Activated CD4-positive, alpha-beta T cell treated with anti-CD3 and anti-CD28 coated beads, Interleukin-2, amount 10 ng/mL, durations not matched to agents 24 days and 14 days (primary cell): ENCODE measurements at regions of chr12 and their contacts with region 1.

Region 1: DNA sequence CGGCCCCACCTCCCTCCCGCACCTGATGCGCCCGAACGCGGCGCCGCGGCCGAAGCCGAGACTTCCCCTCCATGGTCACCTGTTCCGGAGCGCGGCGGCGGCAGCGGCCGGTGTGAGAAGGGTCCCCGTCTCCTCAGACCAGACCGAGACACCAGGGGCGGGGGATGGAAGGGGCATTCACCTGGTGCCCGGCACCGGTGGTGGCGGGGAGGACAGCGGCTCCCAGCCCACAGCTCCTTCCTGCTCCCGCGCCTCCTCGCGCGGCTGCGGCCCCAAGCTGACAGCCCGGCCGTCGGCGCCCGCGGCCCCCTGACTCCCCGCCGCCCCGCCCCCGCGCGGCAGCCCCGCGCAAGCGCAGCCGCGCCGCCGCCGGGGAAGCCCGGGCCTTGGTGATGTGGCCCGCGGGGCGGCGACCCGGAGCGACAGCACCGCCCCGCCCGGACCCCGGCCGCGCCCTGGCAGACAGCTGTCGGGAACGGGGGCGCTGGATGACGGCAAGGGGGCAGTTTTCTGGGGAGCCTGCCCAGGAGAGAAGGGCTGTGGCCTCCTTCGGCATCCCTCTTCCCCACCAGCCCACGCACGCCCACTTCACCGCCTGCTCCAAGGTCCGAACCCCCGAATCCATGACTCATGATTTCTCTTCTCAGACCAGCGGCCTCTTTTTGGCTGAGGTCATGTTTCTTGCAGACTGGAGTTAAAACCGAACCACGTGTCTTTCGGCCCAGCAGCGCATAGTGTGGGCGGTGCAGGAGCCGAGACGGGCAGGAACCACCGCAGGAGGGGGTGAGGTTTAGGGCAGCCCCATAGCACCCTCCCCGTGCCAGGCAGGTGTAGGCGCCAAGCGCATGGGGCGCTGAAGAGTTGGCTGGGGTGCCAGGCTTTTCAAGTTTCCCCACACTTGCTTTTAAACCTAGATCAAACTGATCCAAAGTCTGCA is at the start of gene SLC41A2:
- DNase-seq: peak; percentile 95
- H3K4me3 Mint-ChIP-seq: peak within 1 kb of the TSS; percentile 85
- H3K27ac Mint-ChIP-seq: peak within 1 kb of the TSS; percentile 92
- H3K4me1 Mint-ChIP-seq: peaks cover 29% of the 10 kb centered on the region
- H3K27me3 Mint-ChIP-seq: peaks cover 39% of the 10 kb centered on the region
- total RNA-seq, gene SLC41A2: 11.5 and 12.3 TPM in 2 replicates

Region 2: DNA sequence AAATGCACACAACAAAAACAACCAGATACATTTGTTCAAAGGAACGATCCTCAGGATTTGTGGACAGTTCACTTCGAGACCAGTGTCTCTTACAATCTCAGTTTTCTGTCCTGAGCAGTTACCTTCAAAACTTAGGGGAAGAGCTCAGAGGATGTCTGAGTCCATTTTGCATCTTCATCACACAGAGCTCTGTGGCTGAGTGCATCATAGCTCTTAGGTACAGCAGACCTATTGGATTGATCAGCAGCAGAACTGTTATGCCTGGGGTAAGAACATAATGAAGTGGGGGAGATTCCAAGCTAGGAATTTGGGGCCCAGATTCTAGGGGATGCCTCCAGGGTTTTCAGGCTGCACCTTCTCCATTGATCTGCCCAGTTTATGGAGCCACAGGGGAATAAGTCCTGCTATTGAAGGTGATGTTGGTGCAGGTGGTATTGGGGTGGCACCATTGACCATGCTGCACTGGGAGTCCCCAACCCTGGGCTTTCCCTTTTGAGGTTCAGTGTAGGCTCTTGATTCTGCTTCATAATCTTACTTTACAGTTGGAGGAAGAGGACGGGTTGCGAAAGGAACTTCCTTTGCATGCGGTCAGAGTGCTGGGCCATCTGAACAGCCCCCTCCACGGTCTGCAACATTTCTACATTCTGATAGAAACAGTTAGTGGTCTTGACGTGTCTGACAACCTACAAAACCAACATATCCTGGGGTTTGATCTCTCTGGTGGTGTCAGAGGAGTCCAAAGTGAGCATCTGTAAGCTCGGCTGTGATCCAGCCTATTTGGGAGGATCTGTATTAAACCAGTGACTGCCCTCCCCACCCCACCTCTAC is 388.7 kb before region 1 on chr12:
- intact Hi-C with region 1: loop called (anchors 10 kb)
- DNase-seq: peak; percentile 86
- H3K4me3 Mint-ChIP-seq: peak overlapping the region; percentile 66
- H3K27ac Mint-ChIP-seq: peak overlapping the region; percentile 83
- H3K4me1 Mint-ChIP-seq: peaks cover 53% of the 10 kb centered on the region
- H3K27me3 Mint-ChIP-seq: no peaks in the 10 kb centered on the region

Region 3: DNA sequence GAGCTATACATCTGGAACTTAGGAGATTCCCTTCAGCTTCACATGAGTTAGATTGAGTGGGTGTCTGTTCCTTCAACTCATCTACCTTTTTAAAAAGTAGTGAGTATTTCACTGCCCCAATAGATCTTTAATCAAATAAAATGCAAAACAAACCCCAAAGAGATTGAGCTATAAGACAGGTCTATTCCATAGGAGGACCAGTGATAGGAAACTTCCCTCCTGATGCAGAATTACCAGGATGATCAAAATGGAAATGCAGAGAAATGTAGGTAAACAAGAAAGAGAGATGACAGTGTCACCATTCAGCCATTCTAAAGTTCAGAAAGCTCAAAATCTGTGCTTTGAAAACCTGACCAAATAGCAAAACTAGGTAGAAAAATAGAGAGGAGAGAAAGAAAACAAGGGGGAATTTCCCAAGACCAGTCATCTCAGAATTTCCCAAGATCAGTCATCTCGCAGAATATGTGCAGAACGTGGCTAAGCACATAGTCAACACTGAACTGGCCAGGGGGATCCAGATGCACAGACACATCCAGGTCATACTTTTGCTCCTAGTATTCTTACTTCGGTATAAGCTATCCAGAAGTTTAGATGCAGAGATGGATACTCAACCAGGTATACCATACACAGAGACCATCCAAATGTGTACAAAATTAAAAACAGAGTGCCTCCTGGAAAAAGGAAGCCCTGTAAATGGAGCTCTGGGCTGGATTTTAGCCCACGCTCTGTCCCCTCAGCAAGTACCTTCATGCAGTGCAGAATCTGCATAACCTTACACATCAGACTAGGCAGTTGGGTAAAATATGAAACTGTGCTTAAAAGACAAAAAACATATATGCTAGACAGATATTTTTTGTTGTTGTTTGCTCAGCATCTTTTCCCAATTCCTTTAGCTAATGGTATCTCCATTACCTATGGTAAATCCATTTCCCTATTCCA is 27.6 kb before region 1 on chr12:
- intact Hi-C with region 1: loop called (anchors 1 kb)
- DNase-seq: peak; percentile 79
- H3K4me3 Mint-ChIP-seq: peak overlapping the region; percentile 39
- H3K27ac Mint-ChIP-seq: peak overlapping the region; percentile 87
- H3K4me1 Mint-ChIP-seq: peaks cover 41% of the 10 kb centered on the region
- H3K27me3 Mint-ChIP-seq: no peaks in the 10 kb centered on the region

Region 4: DNA sequence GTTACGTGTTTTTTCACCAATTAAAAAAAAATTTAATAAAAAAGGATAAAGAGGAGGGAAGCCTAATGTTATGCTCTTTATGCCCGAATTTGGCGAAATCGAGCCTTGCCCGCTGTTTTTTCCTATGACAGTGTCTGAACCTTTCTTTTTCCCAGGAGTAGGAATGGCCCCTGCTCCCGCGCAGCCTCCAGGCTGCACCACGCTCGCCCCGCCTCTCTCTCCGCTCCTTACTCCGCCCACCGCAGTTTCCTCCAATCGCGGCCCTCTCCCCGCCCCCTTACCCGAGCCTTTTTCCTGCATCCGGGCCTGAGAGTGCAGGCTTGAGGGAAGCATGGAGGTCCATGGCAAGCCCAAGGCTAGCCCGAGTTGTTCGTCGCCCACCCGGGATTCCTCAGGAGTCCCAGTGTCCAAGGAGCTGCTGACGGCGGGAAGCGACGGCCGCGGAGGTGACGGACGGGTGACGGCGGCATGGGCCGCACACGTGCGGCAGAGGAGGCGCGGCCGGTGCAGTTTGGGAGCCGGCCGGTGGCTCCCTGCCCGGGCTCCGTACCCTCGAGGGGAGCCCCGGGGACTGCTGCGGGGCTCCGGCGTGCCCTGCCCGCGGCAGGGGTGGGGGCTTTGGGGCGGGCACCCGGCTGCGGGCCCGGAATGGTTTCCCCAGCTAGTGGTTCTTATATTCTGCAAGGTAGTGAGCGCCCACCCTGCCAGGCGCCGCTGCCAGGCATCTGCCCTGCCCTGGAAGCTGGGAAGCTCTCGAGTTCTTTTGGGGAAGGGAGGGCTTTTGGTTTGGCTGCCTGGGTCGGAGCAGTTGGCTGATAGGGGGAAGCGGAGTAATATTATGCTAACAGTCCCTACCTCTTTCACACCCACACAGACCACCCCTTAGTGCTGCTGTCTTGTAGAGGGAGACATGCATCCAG is 28.0 kb after region 1 on chr12 and contains the start of gene NOPCHAP1:
- intact Hi-C with region 1: loop called (anchors 1 kb)
- DNase-seq: peak; percentile 97
- H3K4me3 Mint-ChIP-seq: peak within 1 kb of the TSS; percentile 89
- H3K27ac Mint-ChIP-seq: peak within 1 kb of the TSS; percentile 85
- H3K4me1 Mint-ChIP-seq: peaks cover 37% of the 10 kb centered on the region
- H3K27me3 Mint-ChIP-seq: peaks cover 7% of the 10 kb centered on the region
- total RNA-seq, gene NOPCHAP1: 39.8 and 41.3 TPM in 2 replicates